Kidney (tissue), 22 donors: ENCODE measurements at regions of chr4 and their contacts with region 1.

Region 1: DNA sequence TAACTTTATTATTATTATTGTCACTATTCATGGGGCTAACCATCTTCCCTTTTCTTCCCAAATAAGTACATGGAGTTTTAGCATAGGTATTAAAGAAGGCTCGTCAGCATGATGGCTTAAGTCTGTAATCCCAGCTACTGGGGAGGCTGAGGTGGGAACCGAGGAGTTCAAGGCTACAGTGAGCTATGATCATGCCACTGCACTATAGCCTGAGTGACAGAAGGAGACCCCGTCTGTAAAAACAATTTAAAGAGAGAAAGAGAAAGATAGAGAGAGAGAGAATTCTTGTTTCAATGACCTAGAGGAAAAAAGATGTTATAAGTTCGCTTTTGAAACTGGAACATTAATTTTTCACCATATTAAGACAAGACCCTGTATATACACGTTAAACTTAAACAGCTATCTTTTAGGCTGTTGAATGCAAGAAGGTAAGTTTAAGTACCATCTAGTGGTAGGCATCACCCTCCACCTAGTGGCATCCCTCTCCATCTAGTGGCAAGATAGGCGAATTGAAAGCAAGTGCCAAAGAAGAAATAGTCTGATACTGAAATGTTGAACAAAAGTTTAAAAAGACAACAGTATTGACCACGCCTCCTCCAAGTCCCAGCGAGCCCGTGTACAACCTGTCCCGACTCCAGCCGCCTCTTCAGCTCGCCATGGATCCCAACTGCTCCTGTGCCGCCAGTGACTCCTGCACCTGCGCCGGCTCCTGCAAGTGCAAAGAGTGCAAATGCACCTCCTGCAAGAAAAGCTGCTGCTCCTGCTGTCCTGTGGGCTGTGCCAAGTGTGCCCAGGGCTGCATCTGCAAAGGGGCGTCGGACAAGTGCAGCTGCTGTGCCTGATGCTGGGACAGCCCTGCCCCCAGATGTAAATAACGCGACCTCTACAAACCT is 26.0 kb upstream of the YTHDC1 start:
- DNase-seq: peak; percentile 58 to 82 (median 72)
- H3K4me3 ChIP-seq: peak overlapping the region; percentile 45 to 56 (median 49)
- H3K27ac ChIP-seq: no peak overlapping the region
- H3K4me1 ChIP-seq: peaks cover 0 to 2% (median 0%) of the 10 kb centered on the region in 3 donors
- H3K27me3 ChIP-seq: no peaks in the 10 kb centered on the region
- CTCF ChIP-seq: peak; percentile 90

Region 2: DNA sequence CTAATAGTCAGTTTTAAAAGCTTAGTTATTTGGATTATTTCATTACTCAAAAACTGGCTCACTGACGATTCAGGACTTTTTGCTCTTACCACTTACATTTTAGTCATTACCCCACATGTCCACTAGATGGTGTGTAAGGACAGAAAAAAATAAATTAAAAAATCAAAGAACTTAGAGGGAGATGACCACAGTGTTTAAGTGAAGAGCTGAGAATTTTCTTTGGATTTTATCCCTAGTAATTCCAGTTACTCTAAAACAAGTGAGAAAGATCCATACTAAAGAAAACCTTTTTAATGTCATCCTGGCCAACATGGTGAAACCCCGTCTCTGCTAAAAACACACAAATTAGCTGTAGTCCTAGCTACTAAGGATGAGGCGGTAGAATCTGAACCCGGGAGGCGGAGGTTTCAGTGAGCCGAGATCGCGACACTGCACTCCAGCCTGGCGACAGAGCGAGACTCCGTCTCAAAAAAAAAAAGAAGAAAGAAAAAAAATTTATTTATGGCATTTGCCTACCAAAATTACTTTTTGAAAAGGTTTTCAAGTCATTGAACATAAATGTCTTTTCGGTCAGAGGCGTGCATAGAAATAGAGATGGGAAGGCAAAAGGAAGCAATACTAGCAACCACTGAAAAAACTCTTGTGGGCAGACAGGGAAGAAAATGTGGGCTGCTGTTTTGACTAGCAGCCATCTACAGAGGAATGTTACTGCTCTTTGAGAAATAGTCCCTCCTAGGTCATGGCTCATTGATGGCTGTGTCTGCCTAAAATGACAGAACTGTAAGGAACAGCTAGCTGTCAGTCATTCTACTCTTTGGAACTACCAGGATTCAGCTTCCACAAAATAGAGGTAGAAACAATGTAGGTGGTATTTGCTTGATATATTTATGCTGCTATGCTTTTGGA is 103.8 kb before region 1 on chr4:
- intact Hi-C with region 1: loop called (anchors 5 kb)
- DNase-seq: peak in 2 of 5 donors; percentile 82 to 85
- H3K4me3 ChIP-seq: peak overlapping the region; percentile 45 to 49 (median 46)
- H3K27ac ChIP-seq: no peak overlapping the region
- H3K4me1 ChIP-seq: peaks cover 0 to 4% (median 2%) of the 10 kb centered on the region in 3 donors
- H3K27me3 ChIP-seq: no peaks in the 10 kb centered on the region
- CTCF ChIP-seq: peak; percentile 80

Region 3: DNA sequence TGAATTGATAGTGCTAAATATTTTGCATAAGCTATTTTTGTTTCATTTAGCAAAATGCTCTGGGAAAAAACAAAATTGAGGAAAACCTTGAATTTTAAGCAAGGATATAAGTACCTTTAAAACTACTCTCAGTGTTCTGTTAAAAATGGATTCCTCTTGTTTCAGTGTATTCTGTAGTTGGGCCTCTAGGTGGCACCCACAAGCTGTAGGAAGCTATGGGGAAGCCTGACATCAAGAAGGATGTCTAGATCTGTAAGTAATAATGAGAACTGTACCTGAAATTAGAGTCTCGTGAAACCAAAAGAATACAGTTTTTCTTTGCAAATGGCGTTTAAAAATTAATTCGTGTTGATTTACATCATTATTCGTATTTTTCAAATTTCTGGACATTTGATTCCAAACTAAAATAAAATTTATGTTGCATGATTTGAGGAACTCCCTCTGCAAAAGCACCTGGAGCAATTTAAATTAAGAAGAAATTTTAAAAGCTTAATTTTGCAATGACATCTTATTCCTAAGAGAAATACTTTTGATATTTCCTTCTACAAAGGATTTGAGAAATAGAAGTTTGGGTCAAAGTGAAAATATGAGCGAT is 122.6 kb after region 1 on chr4:
- intact Hi-C with region 1: no loop called
- DNase-seq: peak in 4 of 5 donors; percentile 72 to 85 (median 78)
- H3K4me3 ChIP-seq: no peak overlapping the region
- H3K27ac ChIP-seq: no peak overlapping the region
- H3K4me1 ChIP-seq: no peaks in the 10 kb centered on the region
- H3K27me3 ChIP-seq: no peaks in the 10 kb centered on the region
- CTCF ChIP-seq: peak; percentile 84